CD8-positive, alpha-beta memory T cell (primary cell): ENCODE measurements at regions of chr13 and their contacts with region 1.

Region 1: DNA sequence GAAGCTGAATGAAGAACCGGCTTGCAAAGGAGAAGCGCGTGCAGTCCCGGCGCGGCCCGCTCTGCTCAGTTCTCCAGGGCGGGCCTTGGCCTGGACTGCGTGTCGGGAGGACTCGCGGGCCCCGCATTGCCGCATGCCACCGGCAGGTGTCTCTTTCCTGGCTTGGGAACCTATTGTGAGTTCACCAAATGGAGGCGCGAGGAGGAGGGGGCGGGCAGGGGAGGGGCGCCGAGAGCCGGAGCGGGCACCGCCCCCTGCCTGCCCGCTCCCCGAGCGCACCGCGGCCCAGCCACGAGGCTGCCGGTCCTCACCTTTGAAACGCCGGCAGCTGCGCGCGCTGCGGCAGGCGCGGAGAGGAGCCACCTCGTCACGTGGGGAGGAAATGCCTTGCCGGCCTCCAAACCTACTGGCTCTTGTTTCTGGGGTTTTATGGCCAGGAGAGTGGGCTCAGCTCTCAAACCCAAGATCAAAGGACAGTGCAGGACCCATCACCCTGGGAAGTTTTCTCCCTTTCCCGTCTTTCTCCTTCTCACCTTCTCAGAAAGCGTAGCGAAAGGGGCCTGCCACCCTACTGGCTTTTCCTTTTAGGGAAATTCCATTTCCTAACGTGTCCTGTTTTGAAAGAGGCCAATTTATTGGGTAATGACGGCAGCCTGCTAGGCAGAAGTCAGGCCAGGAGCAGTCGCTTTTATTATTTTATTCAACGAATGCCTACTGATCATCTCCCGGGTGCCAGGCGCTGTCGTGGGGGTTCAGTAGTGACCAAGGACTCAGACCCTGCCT is 13.8 kb upstream of the UBE2L5 start:
- DNase-seq: peak; percentile 81 to 92 (median 85)
- H3K4me3 ChIP-seq: no peak overlapping the region
- H3K4me3 Mint-ChIP-seq: peak overlapping the region; percentile 50 to 84 (median 72)
- H3K27ac ChIP-seq: no peak overlapping the region
- H3K27ac Mint-ChIP-seq: peak overlapping the region; percentile 63 to 93 (median 82)
- H3K4me1 ChIP-seq: peaks cover 10% of the 10 kb centered on the region
- H3K4me1 Mint-ChIP-seq: peaks cover 31 to 43% (median 36%) of the 10 kb centered on the region in 3 donors
- H3K27me3 ChIP-seq: no peaks in the 10 kb centered on the region
- H3K27me3 Mint-ChIP-seq: no peaks in the 10 kb centered on the region

Region 2: GRCh38 chr13:30422054-30422839 is 13.7 kb after region 1 on chr13 and contains the start of gene UBE2L5:
- CTCF ChIA-PET with region 1: interaction called, 6 read pairs
- POLR2A ChIA-PET with region 1: interaction called, 11 read pairs
- DNase-seq: peak; percentile 62 to 81 (median 71)
- H3K4me3 ChIP-seq: peak within 1 kb of the TSS; percentile 48
- H3K4me3 Mint-ChIP-seq: peak within 1 kb of the TSS; percentile 80 to 98 (median 87)
- H3K27ac ChIP-seq: no peak within 1 kb of the TSS
- H3K27ac Mint-ChIP-seq: peak within 1 kb of the TSS; percentile 25 to 93 (median 82)
- H3K4me1 ChIP-seq: peaks cover 6% of the 10 kb centered on the region
- H3K4me1 Mint-ChIP-seq: peaks cover 11 to 23% (median 20%) of the 10 kb centered on the region in 3 donors
- H3K27me3 ChIP-seq: no peaks in the 10 kb centered on the region
- H3K27me3 Mint-ChIP-seq: peaks cover 0 to 2% of the 10 kb centered on the region in 2 donors
- total RNA-seq, gene UBE2L5: not detected